Gastrocnemius medialis (tissue), 4 donors: ENCODE measurements at regions of chr11 and their contacts with region 1.

Region 1: GRCh38 chr11:8309862-8310261 is 46.2 kb upstream of the LMO1 start:
- DNase-seq: no peak
- ATAC-seq: peak; percentile 54 to 56
- H3K4me3 ChIP-seq: no peak overlapping the region
- H3K27ac ChIP-seq: no peak overlapping the region
- H3K4me1 ChIP-seq: no peaks in the 10 kb centered on the region
- H3K27me3 ChIP-seq: no peaks in the 10 kb centered on the region
- CTCF ChIP-seq: peak in 4 of 5 experiments; percentile 18 to 39 (median 34)
- POLR2A ChIP-seq: no peak

Region 2: GRCh38 chr11:8225589-8226036 is 84.2 kb before region 1 on chr11:
- in situ Hi-C with region 1: no loop called
- intact Hi-C with region 1: loop called (anchors 5 kb)
- DNase-seq: peak; percentile 43 to 62
- ATAC-seq: peak; percentile 58 to 81
- H3K4me3 ChIP-seq: no peak overlapping the region
- H3K27ac ChIP-seq: no peak overlapping the region
- H3K4me1 ChIP-seq: no peaks in the 10 kb centered on the region
- H3K27me3 ChIP-seq: no peaks in the 10 kb centered on the region
- CTCF ChIP-seq: peak; percentile 95
- POLR2A ChIP-seq: no peak

Region 3: DNA sequence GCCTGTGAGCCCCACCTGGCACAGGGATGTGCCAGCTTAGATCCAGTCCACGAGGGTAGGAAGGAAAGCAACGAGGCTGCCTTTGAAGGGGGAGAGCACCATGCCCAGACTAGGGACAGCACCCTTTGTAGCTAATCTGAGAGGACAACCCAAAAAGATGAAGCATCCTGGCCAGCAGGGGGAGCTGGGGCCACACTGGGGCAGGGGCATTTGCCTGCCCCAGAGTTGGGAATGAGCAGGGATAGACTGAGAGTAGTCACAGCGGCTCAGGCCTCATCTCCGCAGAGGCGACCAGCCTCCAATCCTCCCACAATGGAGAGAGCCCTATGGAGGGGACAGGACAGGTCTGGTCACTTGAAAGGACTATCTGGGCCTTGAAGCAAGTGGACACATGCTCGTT is 62.5 kb before region 1 on chr11:
- in situ Hi-C with region 1: no loop called
- intact Hi-C with region 1: loop called (anchors 1 kb)
- DNase-seq: peak in 1 of 2 donors; percentile 54
- ATAC-seq: peak; percentile 74 to 81
- H3K4me3 ChIP-seq: no peak overlapping the region
- H3K27ac ChIP-seq: no peak overlapping the region
- H3K4me1 ChIP-seq: peaks cover 7 to 18% of the 10 kb centered on the region in 2 donors
- H3K27me3 ChIP-seq: no peaks in the 10 kb centered on the region
- CTCF ChIP-seq: peak; percentile 50 to 83 (median 79)
- POLR2A ChIP-seq: no peak

Region 4: DNA sequence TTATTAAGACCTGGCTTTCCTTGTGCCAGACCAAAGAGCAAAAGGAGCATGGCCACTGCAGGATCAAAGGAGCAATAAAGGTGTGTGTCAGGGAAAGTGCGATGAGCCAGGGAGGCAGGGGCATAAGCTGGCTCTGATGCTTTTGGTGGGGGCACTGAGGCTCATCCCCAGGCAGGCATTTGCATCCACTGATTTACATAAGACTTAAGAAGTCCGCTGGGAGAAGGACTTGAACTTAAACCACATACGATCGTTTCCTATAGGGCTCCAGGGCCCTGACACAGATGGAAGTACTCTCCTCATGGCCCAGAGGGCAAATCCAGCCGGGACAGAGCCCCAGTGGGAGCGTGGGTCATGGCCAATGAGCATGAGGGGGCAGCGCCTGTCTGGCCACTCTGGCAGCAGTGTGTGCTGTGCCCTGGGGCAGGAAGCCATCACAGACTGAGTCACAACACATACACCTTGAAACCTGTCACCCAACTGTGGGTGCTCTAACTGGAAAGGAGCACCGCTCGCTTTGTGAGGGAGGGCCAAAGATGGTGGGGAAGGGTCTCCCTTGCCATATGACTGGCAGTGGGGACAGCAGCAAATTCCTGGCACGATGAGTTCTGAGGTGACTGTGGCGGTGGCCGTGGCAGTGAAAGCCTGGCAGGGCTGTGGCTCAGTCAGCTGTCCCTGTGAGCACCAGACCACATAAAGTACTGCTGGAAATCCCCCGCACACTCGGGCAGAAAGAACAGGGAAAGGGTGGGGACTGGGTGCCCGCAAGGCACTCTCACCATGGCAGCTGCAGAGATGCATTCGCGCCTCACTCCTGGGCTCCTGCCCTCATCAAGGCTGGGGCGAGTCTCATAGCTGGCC is 33.2 kb after region 1 on chr11:
- in situ Hi-C with region 1: no loop called
- intact Hi-C with region 1: no loop called
- DNase-seq: no peak
- ATAC-seq: no peak
- H3K4me3 ChIP-seq: no peak overlapping the region
- H3K27ac ChIP-seq: no peak overlapping the region
- H3K4me1 ChIP-seq: no peaks in the 10 kb centered on the region
- H3K27me3 ChIP-seq: no peaks in the 10 kb centered on the region
- CTCF ChIP-seq: no peak
- POLR2A ChIP-seq: no peak

Region 5: GRCh38 chr11:8533332-8533731 is 223.5 kb after region 1 on chr11:
- in situ Hi-C with region 1: no loop called
- intact Hi-C with region 1: no loop called
- DNase-seq: no peak
- ATAC-seq: no peak
- H3K4me3 ChIP-seq: no peak overlapping the region
- H3K27ac ChIP-seq: no peak overlapping the region
- H3K4me1 ChIP-seq: no peaks in the 10 kb centered on the region
- H3K27me3 ChIP-seq: no peaks in the 10 kb centered on the region
- CTCF ChIP-seq: no peak
- POLR2A ChIP-seq: no peak